Caco-2 (cell line): ENCODE measurements at regions of chr2 and their contacts with region 1.

Region 1: GRCh38 chr2:120693121-120693520 is 42.5 kb upstream of the GLI2 start:
- DNase-seq: no peak
- H3K4me3 ChIP-seq: no peak overlapping the region
- H3K4me3 Mint-ChIP-seq: no peak overlapping the region
- H3K27ac Mint-ChIP-seq: no peak overlapping the region
- H3K4me1 ChIP-seq: peaks cover 8% of the 10 kb centered on the region
- H3K4me1 Mint-ChIP-seq: peaks cover 13% of the 10 kb centered on the region
- H3K27me3 ChIP-seq: no peaks in the 10 kb centered on the region
- H3K27me3 Mint-ChIP-seq: peaks cover 12% of the 10 kb centered on the region
- CTCF ChIP-seq: no peak

Region 2: GRCh38 chr2:120779781-120780283 is 86.7 kb after region 1 on chr2:
- CTCF ChIA-PET with region 1: interaction called, 4 read pairs
- POLR2A ChIA-PET with region 1: no interaction called
- intact Hi-C with region 1: loop called (anchors 10 kb)
- DNase-seq: peak in 1 of 2 experiments; percentile 24
- H3K4me3 ChIP-seq: no peak overlapping the region
- H3K4me3 Mint-ChIP-seq: no peak overlapping the region
- H3K27ac Mint-ChIP-seq: no peak overlapping the region
- H3K4me1 ChIP-seq: no peaks in the 10 kb centered on the region; the same call in 1 of the 2 replicates
- H3K4me1 Mint-ChIP-seq: peaks cover 9% of the 10 kb centered on the region
- H3K27me3 ChIP-seq: no peaks in the 10 kb centered on the region
- H3K27me3 Mint-ChIP-seq: peaks cover 4% of the 10 kb centered on the region
- CTCF ChIP-seq: no peak

Region 3: DNA sequence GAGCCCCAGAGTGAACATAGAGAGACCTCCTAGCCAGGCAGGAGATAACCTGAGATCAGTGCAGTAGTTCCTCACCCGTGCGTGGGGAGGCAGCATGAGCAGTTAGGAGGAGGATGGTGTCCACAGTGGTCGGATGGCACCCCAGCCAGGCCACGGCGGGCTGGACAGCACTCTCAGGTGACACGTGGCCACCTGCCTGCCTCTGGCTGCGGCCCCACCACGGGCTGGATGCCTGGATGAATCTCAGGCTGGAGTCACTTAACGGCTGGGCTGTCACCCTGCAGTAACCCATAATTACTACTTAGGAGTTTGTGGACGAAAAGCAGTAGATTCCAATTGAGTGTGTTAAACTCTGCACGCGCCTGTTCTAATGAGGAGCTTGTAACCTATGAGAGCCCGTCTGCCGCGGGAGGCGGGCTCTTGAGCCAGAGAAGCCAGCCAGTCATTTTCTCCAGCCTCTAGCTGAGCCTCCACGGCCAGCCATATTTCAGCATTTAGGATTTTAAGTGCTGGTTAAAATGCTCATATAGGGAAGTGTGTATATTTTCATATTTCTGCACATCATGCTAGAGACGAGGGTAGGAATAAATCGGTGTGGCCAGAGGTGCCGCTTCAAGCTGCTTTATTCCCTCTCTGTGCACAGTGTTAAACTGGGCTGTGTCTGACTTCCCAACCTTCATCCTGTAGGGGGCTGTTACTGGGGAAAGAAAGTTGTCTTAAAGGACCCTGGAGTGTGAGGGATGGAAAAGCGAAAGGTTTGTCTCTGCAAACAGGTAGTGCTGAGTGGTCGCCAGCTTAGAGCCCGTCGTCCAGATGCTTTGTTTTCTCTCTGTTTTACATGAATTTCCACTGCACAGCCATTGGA is 186.5 kb after region 1 on chr2:
- CTCF ChIA-PET with region 1: no interaction called
- POLR2A ChIA-PET with region 1: no interaction called
- intact Hi-C with region 1: loop called (anchors 1 kb)
- DNase-seq: peak in 1 of 2 experiments; percentile 46
- H3K4me3 ChIP-seq: no peak overlapping the region
- H3K4me3 Mint-ChIP-seq: peak overlapping the region; percentile 67
- H3K27ac Mint-ChIP-seq: no peak overlapping the region
- H3K4me1 ChIP-seq: no peaks in the 10 kb centered on the region
- H3K4me1 Mint-ChIP-seq: no peaks in the 10 kb centered on the region
- H3K27me3 ChIP-seq: no peaks in the 10 kb centered on the region
- H3K27me3 Mint-ChIP-seq: no peaks in the 10 kb centered on the region
- CTCF ChIP-seq: peak; percentile 23 to 42

Region 4: DNA sequence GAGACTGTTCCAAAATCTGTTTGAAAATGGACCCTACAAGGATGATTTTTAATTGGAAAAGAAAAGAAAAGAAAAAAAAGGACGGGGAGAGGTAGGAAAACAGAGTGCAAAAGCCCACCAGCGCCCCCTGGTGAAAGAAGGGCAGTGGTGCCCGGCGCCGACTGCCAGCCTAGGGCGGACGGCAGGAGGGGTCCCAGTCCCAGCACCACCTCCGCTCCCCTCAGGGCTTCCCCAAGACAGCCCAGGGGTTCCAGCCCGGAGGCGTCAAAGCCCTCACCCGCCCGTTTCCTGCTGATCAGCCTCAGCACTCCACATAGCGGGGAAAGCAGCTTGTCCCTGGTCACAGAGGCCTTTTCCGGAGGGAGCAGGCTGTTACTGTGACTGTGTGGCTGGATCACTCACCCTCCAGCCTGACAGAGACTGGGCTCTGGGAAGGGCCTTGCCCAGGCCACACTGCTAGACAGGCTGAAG is 377.9 kb after region 1 on chr2:
- CTCF ChIA-PET with region 1: interaction called, 18 read pairs
- POLR2A ChIA-PET with region 1: interaction called, 9 read pairs
- intact Hi-C with region 1: loop called (anchors 1 kb)
- DNase-seq: peak; percentile 71 to 88
- H3K4me3 ChIP-seq: no peak overlapping the region
- H3K4me3 Mint-ChIP-seq: no peak overlapping the region
- H3K27ac Mint-ChIP-seq: no peak overlapping the region
- H3K4me1 ChIP-seq: peaks cover 12% of the 10 kb centered on the region
- H3K4me1 Mint-ChIP-seq: no peaks in the 10 kb centered on the region
- H3K27me3 ChIP-seq: no peaks in the 10 kb centered on the region
- H3K27me3 Mint-ChIP-seq: peaks cover 3% of the 10 kb centered on the region
- CTCF ChIP-seq: peak; percentile 95 to 96